Activated CD8-positive, alpha-beta T cell treated with anti-CD3 and anti-CD28 coated beads for 36 hours (primary cell): ENCODE measurements at regions of chr11 and their contacts with region 1.

Region 1: DNA sequence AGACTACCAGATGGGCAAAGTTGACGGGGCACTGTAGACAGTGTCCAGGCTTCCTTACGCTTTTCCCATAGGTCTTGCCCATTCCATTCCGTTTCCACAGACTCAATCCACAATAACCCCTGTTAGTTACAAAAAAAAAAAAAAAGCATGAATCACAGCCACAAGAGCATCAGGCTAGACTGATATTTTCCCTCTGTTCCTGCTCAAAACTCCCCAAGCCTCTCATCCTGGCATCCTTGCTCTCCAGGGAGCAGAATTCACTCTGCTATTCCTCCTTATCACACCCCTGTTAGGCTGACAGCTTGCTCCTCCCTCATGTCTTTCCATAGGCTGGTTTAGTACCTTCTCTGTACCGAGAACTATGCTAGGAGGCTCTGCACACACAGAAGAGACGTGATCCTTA is 42.2 kb downstream of the TMEM123 start:
- DNase-seq: no peak
- ATAC-seq: no peak
- H3K4me3 Mint-ChIP-seq: no peak overlapping the region
- H3K27ac Mint-ChIP-seq: peak overlapping the region; percentile 52
- H3K4me1 Mint-ChIP-seq: peaks cover 85% of the 10 kb centered on the region
- H3K27me3 Mint-ChIP-seq: no peaks in the 10 kb centered on the region
- CTCF ChIP-seq: no peak

Region 2: GRCh38 chr11:102451681-102452460 is 41.5 kb after region 1 on chr11:
- CTCF ChIA-PET with region 1: no interaction called
- POLR2A ChIA-PET with region 1: interaction called, 4 read pairs
- intact Hi-C with region 1: loop called (anchors 5 kb)
- DNase-seq: peak; percentile 88
- ATAC-seq: peak; percentile 64
- H3K4me3 Mint-ChIP-seq: peak overlapping the region; percentile 98
- H3K27ac Mint-ChIP-seq: peak overlapping the region; percentile 96
- H3K4me1 Mint-ChIP-seq: peaks cover 75% of the 10 kb centered on the region
- H3K27me3 Mint-ChIP-seq: no peaks in the 10 kb centered on the region
- CTCF ChIP-seq: peak; percentile 27